CD8-positive, alpha-beta T cell (primary cell): ENCODE measurements at regions of chr7 and their contacts with region 1.

Region 1: DNA sequence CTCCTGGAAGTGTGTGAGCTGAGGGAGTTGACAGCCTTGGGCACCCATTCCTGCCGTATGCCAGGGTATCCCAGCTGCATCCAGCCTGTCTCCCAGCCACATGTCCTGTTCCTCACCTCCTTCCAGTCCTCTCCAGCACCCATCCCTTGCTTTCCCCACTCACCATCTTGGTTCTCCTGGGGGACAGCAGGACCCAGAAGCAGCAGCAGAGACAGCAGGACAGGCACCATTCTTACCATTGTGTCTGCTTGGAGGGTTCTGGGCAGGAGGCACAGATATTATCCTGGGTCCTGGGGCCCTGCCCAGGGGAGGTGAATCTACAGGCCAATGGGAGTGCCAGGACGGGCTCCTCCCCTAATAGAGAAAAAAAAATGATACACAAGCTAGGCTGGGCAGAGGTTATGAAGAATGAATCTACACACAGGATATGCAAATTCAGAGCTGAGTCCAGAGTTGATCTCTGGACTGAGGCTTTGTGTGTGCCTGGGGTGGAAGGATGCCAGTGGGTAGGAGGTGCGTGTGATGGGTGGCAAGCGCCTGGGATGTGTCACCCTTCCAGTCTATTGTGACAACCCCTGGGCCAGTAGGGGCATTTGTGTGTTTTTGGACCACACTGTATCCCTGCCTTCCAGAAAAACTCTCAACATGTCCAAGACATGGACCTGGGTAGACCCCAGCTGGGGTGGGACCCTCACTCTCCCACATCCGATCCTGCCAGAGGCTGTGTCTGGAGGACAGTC is at the start of gene AZGP1:
- DNase-seq: no peak
- ATAC-seq: no peak
- H3K4me3 ChIP-seq: no peak within 1 kb of the TSS
- H3K4me3 Mint-ChIP-seq: no peak within 1 kb of the TSS
- H3K27ac ChIP-seq: no peak within 1 kb of the TSS
- H3K27ac Mint-ChIP-seq: no peak within 1 kb of the TSS
- H3K4me1 ChIP-seq: no peaks in the 10 kb centered on the region
- H3K4me1 Mint-ChIP-seq: peaks cover 6% of the 10 kb centered on the region
- H3K27me3 ChIP-seq: no peaks in the 10 kb centered on the region
- H3K27me3 Mint-ChIP-seq: peaks cover 4% of the 10 kb centered on the region
- CTCF ChIP-seq: no peak
- total RNA-seq, gene AZGP1: not detected

Region 2: GRCh38 chr7:99990460-99990852 is 14.5 kb after region 1 on chr7:
- CTCF ChIA-PET with region 1: interaction called, 49 read pairs
- POLR2A ChIA-PET with region 1: no interaction called
- intact Hi-C with region 1: loop called in 1 of 2 experiments (anchors 1 kb)
- DNase-seq: no peak
- ATAC-seq: no peak
- H3K4me3 ChIP-seq: no peak overlapping the region
- H3K4me3 Mint-ChIP-seq: no peak overlapping the region
- H3K27ac ChIP-seq: no peak overlapping the region
- H3K27ac Mint-ChIP-seq: no peak overlapping the region
- H3K4me1 ChIP-seq: no peaks in the 10 kb centered on the region
- H3K4me1 Mint-ChIP-seq: peaks cover 3% of the 10 kb centered on the region
- H3K27me3 ChIP-seq: no peaks in the 10 kb centered on the region
- H3K27me3 Mint-ChIP-seq: peaks cover 4% of the 10 kb centered on the region
- CTCF ChIP-seq: no peak

Region 3: GRCh38 chr7:101294039-101294831 is 1318.3 kb after region 1 on chr7:
- CTCF ChIA-PET with region 1: no interaction called
- POLR2A ChIA-PET with region 1: no interaction called
- intact Hi-C with region 1: loop called (anchors 5 kb)
- DNase-seq: no peak
- ATAC-seq: no peak
- H3K4me3 ChIP-seq: no peak overlapping the region
- H3K4me3 Mint-ChIP-seq: no peak overlapping the region
- H3K27ac ChIP-seq: no peak overlapping the region
- H3K27ac Mint-ChIP-seq: no peak overlapping the region
- H3K4me1 ChIP-seq: no peaks in the 10 kb centered on the region
- H3K4me1 Mint-ChIP-seq: peaks cover 12% of the 10 kb centered on the region
- H3K27me3 ChIP-seq: peaks cover 1 to 19% of the 10 kb centered on the region in 2 experiments
- H3K27me3 Mint-ChIP-seq: peaks cover 38% of the 10 kb centered on the region
- CTCF ChIP-seq: no peak